HEK293 (cell line): ENCODE measurements at regions of chr1 and their contacts with region 1.

Region 1: DNA sequence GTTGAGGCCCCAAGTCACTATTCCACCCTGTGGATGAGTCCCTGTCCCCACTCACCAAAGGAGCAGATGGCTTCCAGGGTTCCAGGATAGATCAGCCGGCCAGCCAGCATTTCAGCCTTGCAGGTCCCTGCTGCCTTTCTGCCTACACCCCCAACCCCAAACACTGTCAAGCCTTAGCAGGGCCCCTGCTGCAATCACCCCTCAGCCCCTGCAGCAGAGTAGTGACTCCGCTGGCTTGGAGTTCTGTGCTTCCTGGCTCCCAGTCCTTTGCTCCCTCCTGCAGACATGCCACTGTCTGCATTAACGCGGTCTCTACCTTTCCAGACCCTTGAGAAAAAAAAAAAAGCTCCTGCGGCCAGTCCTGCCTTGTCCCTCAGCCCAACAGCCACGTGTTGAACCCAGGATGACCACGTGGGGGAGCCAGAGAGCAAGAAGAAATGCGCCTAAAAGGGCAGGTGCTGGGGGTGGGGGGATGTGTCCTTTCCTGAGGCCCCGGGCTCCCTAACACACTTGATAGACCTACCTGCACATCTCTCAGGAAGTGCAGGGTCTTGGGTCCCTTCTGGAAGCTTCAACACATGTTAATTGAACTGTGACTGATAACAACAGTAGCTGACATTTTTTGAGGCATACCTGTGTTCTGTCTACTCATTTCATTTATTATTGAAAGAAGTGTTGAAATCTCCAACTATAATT is 37.4 kb downstream of the RASSF5 start:
- H3K4me3 ChIP-seq: no peak overlapping the region
- H3K27ac ChIP-seq: no peak overlapping the region
- H3K4me1 ChIP-seq: no peaks in the 10 kb centered on the region
- CTCF ChIP-seq: peak; percentile 52; the same call in 1 of the 2 replicates

Region 2: GRCh38 chr1:206430031-206430983 is 114.4 kb before region 1 on chr1:
- CTCF ChIA-PET with region 1: no interaction called
- POLR2A ChIA-PET with region 1: no interaction called
- H3K4me3 ChIP-seq: no peak overlapping the region
- H3K27ac ChIP-seq: no peak overlapping the region
- H3K4me1 ChIP-seq: no peaks in the 10 kb centered on the region
- CTCF ChIP-seq: no peak

Region 3: DNA sequence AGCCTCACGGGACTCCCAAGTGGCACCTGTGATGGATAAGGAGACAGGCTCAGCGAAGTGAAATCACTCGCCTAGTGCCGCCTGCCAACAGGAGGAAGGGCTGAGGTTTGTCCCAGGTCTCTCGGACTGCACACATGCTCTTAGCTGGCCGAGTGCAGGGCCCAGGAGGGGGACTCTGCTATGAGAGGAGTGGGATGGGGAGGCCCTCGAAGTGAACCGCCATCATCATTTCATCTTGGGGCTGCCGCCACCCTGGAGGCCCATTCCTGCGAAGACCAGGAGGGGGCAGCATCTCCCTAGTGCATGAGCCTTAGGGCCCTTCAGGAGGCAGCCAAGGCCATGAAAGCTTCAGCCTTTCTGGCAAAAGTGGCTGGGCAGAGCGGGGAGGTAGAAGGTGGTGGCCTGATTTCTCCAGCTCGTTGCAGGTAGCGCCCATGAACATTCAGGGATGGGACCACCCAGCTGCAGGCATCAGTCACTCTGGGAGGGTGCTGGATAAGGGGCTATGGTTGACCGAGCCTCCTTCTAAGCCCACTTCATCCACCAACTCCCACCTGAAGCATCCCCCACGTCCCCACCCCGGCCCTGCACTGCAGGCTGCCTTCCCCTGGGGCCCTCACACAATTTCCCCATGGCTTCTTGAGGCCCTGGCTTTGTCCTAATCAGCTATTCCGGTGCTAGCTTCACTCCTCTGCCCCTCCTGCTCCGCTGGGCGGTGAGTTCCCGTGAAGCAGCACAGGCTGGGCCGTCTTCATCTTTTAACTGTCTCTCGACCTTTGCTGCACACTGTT is 54.5 kb before region 1 on chr1:
- CTCF ChIA-PET with region 1: interaction called, 35 read pairs
- POLR2A ChIA-PET with region 1: no interaction called
- H3K4me3 ChIP-seq: no peak overlapping the region
- H3K27ac ChIP-seq: no peak overlapping the region
- H3K4me1 ChIP-seq: 0 out of 2 replicates have a peak, but pooled peaks cover under 1% of the 10 kb centered on the region
- CTCF ChIP-seq: peak; percentile 94

Region 4: GRCh38 chr1:206556750-206557635 is 12.3 kb after region 1 on chr1:
- CTCF ChIA-PET with region 1: interaction called, 51 read pairs
- POLR2A ChIA-PET with region 1: no interaction called
- H3K4me3 ChIP-seq: peak overlapping the region; percentile 49
- H3K27ac ChIP-seq: peak overlapping the region; percentile 68
- H3K4me1 ChIP-seq: peaks cover 10% of the 10 kb centered on the region
- CTCF ChIP-seq: peak; percentile 61

Region 5: GRCh38 chr1:206563367-206564207 is 18.9 kb after region 1 on chr1:
- CTCF ChIA-PET with region 1: interaction called, 41 read pairs
- POLR2A ChIA-PET with region 1: no interaction called
- H3K4me3 ChIP-seq: no peak overlapping the region
- H3K27ac ChIP-seq: no peak overlapping the region
- H3K4me1 ChIP-seq: 0 out of 2 replicates have a peak, but pooled peaks cover 2% of the 10 kb centered on the region
- CTCF ChIP-seq: no peak

Region 6: DNA sequence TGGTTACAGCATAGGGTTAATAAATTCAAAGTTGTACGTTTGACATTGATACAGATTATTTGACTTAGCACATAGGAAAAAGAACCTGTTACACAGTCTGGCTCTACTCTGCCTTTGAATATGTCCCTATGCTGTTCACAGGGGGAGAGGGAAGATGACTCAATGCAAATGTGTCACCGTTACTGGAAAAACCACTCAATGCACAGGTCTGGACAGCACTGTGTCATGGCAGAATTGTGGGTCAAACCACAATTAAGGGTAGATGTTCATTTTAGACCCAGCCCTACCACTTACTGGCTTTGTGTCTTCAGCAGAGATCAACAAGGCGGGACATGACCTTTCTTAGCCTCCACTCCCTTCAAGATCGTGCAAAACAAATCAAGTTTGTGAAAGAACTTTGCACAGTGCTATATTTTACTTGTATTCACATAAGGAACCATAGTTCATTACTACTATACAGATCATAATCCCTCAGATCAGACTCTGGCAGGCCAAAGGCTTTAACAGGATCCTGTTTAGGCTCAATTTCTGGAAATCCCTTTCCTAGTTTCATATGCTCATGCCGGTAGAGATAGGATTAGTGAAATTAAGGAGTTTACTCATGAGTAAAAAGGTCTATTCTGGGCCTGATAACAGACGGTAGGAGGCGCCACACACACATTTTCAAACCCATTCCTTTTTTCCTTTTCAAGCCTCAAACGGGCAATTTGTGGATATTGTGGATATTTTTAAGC is 45.5 kb after region 1 on chr1:
- CTCF ChIA-PET with region 1: interaction called, 94 read pairs
- POLR2A ChIA-PET with region 1: no interaction called
- H3K4me3 ChIP-seq: no peak overlapping the region
- H3K27ac ChIP-seq: no peak overlapping the region
- H3K4me1 ChIP-seq: no peaks in the 10 kb centered on the region
- CTCF ChIP-seq: no peak

Region 7: DNA sequence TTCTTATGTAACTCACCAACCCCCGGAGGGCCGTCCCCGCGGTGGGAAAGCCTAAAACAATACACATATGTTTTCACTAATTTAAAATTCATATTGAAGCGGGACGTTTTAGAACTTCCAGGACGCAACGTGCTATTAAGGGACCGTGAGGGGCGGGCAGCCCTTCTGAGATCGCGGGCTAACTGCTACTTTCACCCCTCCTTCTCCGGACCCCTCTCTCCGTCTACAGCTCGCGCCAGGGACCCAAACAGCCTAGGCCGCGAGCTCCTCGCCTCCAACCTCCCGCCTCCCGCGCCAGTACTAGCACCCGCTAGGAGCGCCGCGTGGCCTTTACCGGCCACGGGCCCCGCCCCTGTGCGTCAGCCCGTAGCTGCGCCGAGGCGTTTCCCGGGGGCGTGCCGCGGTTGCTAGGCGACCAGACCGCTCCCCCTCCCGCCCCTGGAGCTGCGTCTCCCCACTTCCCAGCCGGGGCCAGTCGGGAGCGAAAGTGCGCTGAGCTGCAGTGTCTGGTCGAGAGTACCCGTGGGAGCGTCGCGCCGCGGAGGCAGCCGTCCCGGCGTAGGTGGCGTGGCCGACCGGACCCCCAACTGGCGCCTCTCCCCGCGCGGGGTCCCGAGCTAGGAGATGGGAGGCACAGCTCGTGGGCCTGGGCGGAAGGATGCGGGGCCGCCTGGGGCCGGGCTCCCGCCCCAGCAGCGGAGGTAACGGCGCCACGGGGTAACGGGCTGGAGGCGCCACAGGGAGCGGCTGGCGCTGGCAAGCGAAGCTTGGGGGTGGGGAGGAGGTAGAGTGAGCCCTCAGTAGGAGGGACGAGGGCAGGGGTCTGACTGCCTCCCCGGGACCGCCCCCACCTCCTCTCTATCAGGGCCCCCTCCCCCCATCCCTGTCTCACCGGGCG is 90.6 kb after region 1 on chr1 and contains the start of gene DYRK3:
- CTCF ChIA-PET with region 1: interaction called, 5 read pairs
- POLR2A ChIA-PET with region 1: interaction called, 12 read pairs
- H3K4me3 ChIP-seq: peak within 1 kb of the TSS; percentile 88
- H3K27ac ChIP-seq: peak within 1 kb of the TSS; percentile 56; the same call in 1 of the 2 replicates
- H3K4me1 ChIP-seq: peaks cover 11% of the 10 kb centered on the region
- CTCF ChIP-seq: peak; percentile 70

Region 8: DNA sequence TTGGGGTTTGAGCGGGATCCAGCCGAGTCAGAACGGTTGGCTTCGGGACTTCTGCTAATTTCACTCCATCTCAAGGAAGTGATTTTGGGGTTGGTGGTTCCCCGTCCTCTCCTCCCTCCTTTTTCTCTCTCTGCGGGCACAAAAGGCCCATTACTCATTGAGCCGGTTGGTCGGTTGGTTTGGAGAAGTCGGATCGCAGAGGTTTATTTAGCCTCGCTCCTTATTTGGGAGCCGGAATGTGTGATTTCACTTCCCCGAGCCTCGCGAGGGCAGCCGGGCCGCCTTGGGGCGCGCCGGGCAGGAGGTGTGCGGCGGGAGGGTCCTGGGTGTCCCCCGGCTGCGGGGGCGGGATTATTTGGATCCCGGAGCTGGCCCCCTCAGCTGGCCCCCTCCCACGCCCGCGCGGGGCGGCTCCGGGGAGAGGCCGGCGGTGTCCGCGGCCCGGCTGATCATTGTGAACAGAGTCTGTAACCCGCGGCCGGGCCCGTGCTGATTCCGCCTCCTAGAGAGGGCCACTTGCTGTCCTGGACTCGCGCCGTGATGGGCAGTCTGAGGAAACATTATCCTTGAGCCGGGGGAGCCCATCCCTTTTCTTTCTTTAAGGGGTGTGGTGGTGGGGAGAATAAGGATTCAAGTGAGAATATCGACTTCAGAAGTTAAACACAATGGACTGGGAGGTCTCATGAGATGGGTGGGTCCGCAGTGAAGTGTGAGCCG is 141.2 kb after region 1 on chr1:
- CTCF ChIA-PET with region 1: no interaction called
- POLR2A ChIA-PET with region 1: no interaction called
- H3K4me3 ChIP-seq: peak overlapping the region; percentile 73
- H3K27ac ChIP-seq: peak overlapping the region; percentile 50
- H3K4me1 ChIP-seq: peaks cover 5% of the 10 kb centered on the region; the same call in 1 of the 2 replicates
- CTCF ChIP-seq: no peak

Region 9: GRCh38 chr1:206725109-206725963 is 180.6 kb after region 1 on chr1:
- CTCF ChIA-PET with region 1: no interaction called
- POLR2A ChIA-PET with region 1: no interaction called
- H3K4me3 ChIP-seq: no peak overlapping the region
- H3K27ac ChIP-seq: no peak overlapping the region
- H3K4me1 ChIP-seq: no peaks in the 10 kb centered on the region; the same call in 1 of the 2 replicates
- CTCF ChIP-seq: no peak